ENCODE measurements at regions of chr18 and their contacts with region 1.

Region 1: GRCh38 chr18:70288851-70289328 is at the start of gene SOCS6:
- DNase-seq: peak; percentile 30
- H3K4me3 ChIP-seq: peak within 1 kb of the TSS; percentile 72 to 77
- H3K27ac ChIP-seq: peak within 1 kb of the TSS; percentile 77 to 81
- H3K4me1 ChIP-seq: peaks cover 6% of the 10 kb centered on the region
- H3K27me3 ChIP-seq: no peaks in the 10 kb centered on the region
- CTCF ChIP-seq: no peak
- POLR2A ChIP-seq: peak; percentile 42
- total RNA-seq, gene SOCS6: 25.6 to 31.4 TPM

Region 2: DNA sequence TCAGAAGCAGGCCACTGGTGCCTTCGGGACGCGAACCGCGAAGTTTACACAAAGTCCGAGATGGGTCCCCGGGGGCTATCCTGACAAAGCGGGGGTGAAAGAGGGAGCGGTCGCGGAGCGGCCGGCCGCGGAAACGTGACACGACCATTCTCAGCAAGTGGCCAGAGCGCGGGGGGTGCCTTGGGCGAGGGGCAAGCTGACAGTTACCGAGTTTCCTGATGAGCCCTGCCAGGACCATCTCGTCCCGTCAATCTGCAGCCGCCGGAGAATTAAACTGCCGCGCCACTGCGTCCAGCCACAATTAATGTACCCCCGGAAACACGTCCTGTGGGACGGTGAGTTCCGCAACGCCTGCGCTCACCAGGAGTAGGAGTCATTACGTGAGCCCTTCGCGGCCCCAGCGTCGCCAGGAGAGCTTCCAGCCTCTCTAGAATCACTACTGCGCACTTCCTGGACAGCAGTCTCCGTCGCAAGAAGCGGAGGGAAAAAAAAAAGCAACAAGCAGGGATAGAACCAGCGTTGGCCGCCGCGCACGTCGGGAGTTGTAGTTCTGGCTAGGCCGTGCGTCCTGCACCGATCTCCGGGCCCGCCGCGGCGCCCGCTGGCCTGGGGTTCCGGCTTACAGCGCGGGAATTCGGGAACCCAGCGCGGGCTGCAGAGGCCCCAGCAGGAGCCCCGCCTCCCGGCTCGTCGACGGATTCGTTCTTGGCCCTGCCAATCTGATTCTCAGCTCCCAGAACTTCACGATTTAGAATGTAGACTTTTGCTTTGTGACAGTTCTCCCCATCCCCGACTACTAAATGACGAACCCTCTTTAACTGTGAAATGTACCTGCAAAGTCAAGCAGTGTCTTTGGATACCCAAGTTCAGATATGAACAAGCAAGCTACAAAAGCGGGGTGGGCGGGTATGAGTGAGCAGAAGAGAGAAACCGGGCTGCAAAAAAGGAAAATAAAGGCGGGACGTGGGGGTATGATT is 83.2 kb before region 1 on chr18 and contains the start of gene RTTN:
- intact Hi-C with region 1: loop called (anchors 5 kb)
- DNase-seq: peak; percentile 88
- H3K4me3 ChIP-seq: peak within 1 kb of the TSS; percentile 41 to 66
- H3K27ac ChIP-seq: peak within 1 kb of the TSS; percentile 91 to 92
- H3K4me1 ChIP-seq: no peaks in the 10 kb centered on the region
- H3K27me3 ChIP-seq: no peaks in the 10 kb centered on the region
- CTCF ChIP-seq: peak in 1 of 4 experiments; percentile 18
- POLR2A ChIP-seq: no peak
- total RNA-seq, gene RTTN: 8.4 to 21.5 TPM

Region 3: DNA sequence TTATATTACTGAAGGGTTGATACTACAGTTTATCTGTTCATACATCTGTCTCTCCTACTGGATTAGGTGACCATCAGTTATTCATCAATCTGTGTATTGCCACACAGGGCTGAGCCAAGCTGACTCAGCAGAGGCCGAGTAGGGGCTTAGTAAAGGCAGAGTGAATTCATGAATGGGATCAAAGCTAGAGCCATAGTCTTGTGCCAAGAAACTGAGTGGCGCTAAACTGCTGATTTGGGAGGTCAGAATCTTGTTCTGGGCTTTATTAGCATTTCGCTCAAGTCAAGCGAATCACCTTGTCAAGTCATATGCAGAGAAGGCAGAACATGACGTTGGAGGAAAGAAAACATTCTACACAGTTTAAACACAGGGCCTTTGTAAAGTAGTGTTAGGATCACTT is 34.0 kb after region 1 on chr18:
- intact Hi-C with region 1: no loop called
- DNase-seq: no peak
- H3K4me3 ChIP-seq: no peak overlapping the region
- H3K27ac ChIP-seq: no peak overlapping the region
- H3K4me1 ChIP-seq: no peaks in the 10 kb centered on the region
- H3K27me3 ChIP-seq: no peaks in the 10 kb centered on the region
- CTCF ChIP-seq: no peak
- POLR2A ChIP-seq: no peak

Region 4: GRCh38 chr18:70431203-70431624 is 142.3 kb after region 1 on chr18:
- intact Hi-C with region 1: loop called (anchors 10 kb)
- DNase-seq: no peak
- H3K4me3 ChIP-seq: no peak overlapping the region
- H3K27ac ChIP-seq: no peak overlapping the region
- H3K4me1 ChIP-seq: no peaks in the 10 kb centered on the region
- H3K27me3 ChIP-seq: no peaks in the 10 kb centered on the region
- CTCF ChIP-seq: no peak
- POLR2A ChIP-seq: no peak

Measured in prostate gland (tissue), 2 donors.